ENCODE measurements at regions of chr6 and their contacts with region 1.

Region 1: DNA sequence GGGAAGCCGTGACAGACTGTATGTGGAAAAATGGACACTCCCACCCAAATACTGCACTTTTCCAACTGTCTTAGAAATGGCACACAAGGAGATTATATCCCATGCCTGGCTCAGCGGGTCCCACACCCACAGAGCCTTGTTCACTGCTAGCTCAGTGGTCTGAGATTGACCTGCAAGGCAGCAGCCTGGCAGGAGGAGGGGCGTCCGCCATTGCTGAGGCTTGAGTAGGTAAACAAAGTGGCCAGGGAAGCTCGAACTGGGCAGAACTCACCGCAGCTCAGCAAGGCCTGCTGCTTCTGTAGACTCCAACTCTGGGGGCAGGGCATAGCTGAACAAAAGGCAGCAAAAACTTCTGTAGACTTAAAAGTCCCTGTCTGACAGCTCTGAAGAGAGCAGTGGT is 11.4 kb upstream of the RNF146 start:
- DNase-seq: no peak
- ATAC-seq: peak; percentile 36; the same call in 2 of the 3 replicates
- H3K4me3 ChIP-seq: peak overlapping the region in 2 of 3 experiments; percentile 12 to 32; a peak in 3 of 6 replicates
- H3K27ac ChIP-seq: no peak overlapping the region
- H3K4me1 ChIP-seq: no peaks in the 10 kb centered on the region
- H3K27me3 ChIP-seq: no peaks in the 10 kb centered on the region
- CTCF ChIP-seq: no peak
- EP300 ChIP-seq: no peak
- POLR2A ChIP-seq: no peak
- RAD21 ChIP-seq: no peak

Region 2: DNA sequence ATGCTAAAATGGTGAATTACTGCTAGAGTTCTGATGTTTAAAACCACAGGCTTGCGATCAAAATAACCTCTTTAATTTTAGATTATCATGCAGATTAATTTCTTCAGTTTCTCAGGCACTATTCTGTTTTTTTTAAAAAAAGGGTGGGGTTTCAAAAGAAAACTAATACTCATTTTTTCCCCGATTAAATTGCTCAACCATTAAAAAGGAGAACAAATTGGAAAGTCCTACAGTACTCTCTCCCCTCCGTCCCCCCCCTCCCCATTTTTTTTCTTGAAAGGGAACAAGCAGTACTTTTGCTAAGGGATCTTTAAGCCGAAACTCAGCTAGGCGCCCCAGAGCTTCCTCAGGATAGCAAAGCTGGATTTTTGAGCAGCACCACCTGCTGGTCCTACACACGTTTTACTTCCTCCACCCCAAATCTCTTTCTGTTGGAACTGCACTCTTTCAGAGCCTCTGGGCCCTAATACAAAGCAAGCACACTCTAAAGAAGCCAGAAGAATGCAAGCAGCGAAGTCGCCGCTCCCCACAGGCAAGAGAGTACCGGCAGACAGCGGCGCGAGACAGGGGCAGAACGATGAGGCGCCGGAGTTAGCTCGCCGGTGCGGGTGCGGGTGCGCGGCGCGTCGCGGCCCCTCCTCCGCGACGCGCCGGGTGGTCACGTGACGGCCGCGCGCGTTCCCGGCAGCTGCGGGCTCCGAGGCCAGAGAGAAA is 11.0 kb after region 1 on chr6 and contains the start of gene RNF146:
- CTCF ChIA-PET with region 1: no interaction called
- POLR2A ChIA-PET with region 1: interaction called, 24 read pairs
- in situ Hi-C with region 1: no loop called
- intact Hi-C with region 1: no loop called
- DNase-seq: peak; percentile 81
- ATAC-seq: peak; percentile 85
- H3K4me3 ChIP-seq: peak within 1 kb of the TSS; percentile 87 to 97 (median 95)
- H3K27ac ChIP-seq: peak within 1 kb of the TSS; percentile 91
- H3K4me1 ChIP-seq: peaks cover 34% of the 10 kb centered on the region
- H3K27me3 ChIP-seq: no peaks in the 10 kb centered on the region; a peak in 1 of 5 replicates
- CTCF ChIP-seq: peak; percentile 92
- EP300 ChIP-seq: no peak
- POLR2A ChIP-seq: no peak
- RAD21 ChIP-seq: peak; percentile 49; the same call in 1 of the 2 replicates
- total RNA-seq, gene RNF146: 18.8 and 22.2 TPM in 2 replicates

Region 3: GRCh38 chr6:127277878-127278843 is 22.9 kb after region 1 on chr6:
- CTCF ChIA-PET with region 1: no interaction called
- POLR2A ChIA-PET with region 1: no interaction called
- in situ Hi-C with region 1: no loop called
- intact Hi-C with region 1: no loop called
- DNase-seq: no peak
- ATAC-seq: peak; percentile 77
- H3K4me3 ChIP-seq: no peak overlapping the region
- H3K27ac ChIP-seq: no peak overlapping the region
- H3K4me1 ChIP-seq: peaks cover 10% of the 10 kb centered on the region
- H3K27me3 ChIP-seq: no peaks in the 10 kb centered on the region
- CTCF ChIP-seq: no peak
- EP300 ChIP-seq: 0 out of 4 replicates have a peak, but pooled peaks of 1 of the 2 experiments have one; percentile 21
- POLR2A ChIP-seq: no peak
- RAD21 ChIP-seq: no peak